Activated CD4-positive, alpha-beta T cell treated with anti-CD3 and anti-CD28 coated beads for 36 hours (primary cell): ENCODE measurements at regions of chr7 and their contacts with region 1.

Region 1: DNA sequence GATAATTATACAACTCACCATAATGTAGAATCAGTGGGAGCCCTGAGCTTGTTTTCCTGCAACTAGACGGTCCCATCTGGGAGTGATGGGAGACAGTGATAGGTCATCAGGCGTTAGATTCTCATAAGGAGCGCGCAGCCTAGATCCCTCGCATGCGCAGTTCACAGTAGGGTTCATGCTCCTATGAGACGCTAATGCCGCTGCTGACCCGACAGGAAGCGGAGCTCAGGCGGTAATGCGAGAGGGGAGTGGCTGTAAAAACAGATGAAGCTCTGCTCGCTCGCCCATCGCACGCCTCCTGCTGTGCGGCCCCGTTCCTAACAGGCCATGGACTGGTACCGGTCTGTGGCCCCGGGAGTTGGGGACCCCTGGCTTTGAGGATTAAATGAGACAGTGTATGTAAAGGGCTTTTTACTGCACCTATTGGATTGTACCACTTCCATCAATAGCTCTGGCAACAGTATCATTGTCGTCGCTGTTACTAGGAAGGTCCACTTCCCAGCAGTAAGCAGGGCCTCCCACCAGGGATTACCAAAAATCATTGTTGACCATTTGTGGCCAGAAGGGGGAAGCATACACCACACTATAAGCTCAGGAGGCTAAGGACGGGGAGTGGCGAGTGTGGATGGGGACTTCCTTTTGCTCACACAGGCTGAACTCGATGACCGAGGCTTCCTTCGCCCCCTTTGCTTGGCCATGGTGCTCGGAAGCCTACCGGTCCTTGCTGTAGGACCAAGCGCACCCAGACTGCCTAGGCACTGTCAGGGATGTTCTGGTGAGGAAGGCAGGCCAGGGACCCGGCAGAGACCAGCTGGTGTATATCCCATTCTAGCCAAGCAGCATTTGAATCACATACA is 26.4 kb downstream of the AKR1B1 start:
- DNase-seq: peak; percentile 85
- ATAC-seq: peak; percentile 94
- H3K4me3 Mint-ChIP-seq: peak overlapping the region; percentile 69
- H3K27ac Mint-ChIP-seq: peak overlapping the region; percentile 84
- H3K4me1 Mint-ChIP-seq: peaks cover 10% of the 10 kb centered on the region
- H3K27me3 Mint-ChIP-seq: peaks cover 2% of the 10 kb centered on the region

Region 2: GRCh38 chr7:134444198-134444871 is 11.8 kb after region 1 on chr7:
- CTCF ChIA-PET with region 1: interaction called, 11 read pairs
- POLR2A ChIA-PET with region 1: no interaction called
- intact Hi-C with region 1: no loop called
- DNase-seq: no peak
- ATAC-seq: no peak
- H3K4me3 Mint-ChIP-seq: no peak overlapping the region
- H3K27ac Mint-ChIP-seq: no peak overlapping the region
- H3K4me1 Mint-ChIP-seq: no peaks in the 10 kb centered on the region
- H3K27me3 Mint-ChIP-seq: no peaks in the 10 kb centered on the region

Region 3: DNA sequence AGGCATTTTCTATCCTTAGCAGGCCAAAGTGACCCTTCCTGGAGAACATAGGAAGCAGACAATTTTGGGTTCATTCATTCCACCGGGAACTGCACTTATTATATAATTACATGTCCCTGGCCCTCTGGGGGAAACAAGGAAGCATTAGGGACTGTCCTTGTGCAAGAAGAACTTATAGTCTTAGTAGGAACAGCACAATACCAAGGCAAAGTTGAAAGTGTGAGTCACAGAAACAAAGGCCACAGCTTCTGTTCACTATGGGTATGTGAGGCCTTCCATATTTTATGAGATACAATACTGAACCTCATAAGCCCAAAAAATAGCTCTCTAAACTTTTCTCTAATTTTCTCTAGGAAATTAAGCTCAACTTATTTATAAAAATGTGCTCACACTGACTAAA is 76.5 kb after region 1 on chr7:
- CTCF ChIA-PET with region 1: interaction called, 25 read pairs
- POLR2A ChIA-PET with region 1: no interaction called
- intact Hi-C with region 1: loop called (anchors 1 kb)
- DNase-seq: no peak
- ATAC-seq: no peak
- H3K4me3 Mint-ChIP-seq: no peak overlapping the region
- H3K27ac Mint-ChIP-seq: no peak overlapping the region
- H3K4me1 Mint-ChIP-seq: peaks cover 8% of the 10 kb centered on the region
- H3K27me3 Mint-ChIP-seq: no peaks in the 10 kb centered on the region

Region 4: GRCh38 chr7:134547397-134548054 is 115.0 kb after region 1 on chr7:
- CTCF ChIA-PET with region 1: interaction called, 29 read pairs
- POLR2A ChIA-PET with region 1: no interaction called
- intact Hi-C with region 1: loop called (anchors 1 kb)
- DNase-seq: peak; percentile 82
- ATAC-seq: peak; percentile 79
- H3K4me3 Mint-ChIP-seq: no peak overlapping the region
- H3K27ac Mint-ChIP-seq: no peak overlapping the region
- H3K4me1 Mint-ChIP-seq: peaks cover 4% of the 10 kb centered on the region
- H3K27me3 Mint-ChIP-seq: peaks cover 16% of the 10 kb centered on the region

Region 5: DNA sequence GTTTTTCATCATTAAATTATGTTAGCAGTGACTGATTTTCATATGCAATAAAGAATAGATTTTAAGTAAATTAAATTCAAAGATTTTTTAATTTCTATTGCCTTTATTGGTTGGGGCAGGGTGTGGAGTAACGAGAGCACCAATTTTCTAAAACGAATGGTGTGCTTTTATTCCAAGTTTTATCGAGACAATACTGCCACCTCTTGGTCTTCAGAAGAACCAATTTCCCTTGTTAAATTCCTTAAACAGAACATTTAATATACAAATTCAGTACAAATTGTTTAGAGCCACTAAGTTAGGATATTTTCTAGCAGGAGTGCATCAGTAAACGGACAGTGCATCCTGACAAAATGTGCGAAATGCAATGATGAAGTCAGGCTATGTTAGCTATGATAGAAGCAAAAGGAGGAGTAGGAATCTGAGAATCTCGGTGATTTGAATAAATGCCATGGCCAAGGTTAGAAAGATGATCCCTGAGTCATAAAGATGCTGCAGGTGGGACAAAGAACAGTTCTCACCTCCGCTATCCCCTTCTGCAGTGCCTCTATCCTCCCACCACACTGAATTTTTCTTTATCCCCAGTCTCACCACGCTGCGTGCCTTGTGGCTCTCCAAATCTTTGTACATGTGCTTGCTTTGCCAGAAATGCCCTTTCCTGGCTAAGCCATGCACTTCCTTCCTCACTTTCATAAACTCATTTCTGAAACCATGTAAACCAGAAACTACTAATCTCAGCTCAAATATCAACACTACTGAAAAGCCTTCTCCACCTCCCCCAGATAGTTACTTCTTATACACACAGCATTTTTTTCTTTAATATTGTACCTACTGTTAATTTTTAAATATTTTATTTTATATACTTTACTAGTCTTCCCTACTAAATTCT is 521.9 kb after region 1 on chr7:
- CTCF ChIA-PET with region 1: no interaction called
- POLR2A ChIA-PET with region 1: no interaction called
- intact Hi-C with region 1: loop called in 1 of 2 experiments (anchors 1 kb)
- DNase-seq: no peak
- ATAC-seq: no peak
- H3K4me3 Mint-ChIP-seq: no peak overlapping the region
- H3K27ac Mint-ChIP-seq: no peak overlapping the region
- H3K4me1 Mint-ChIP-seq: peaks cover 2% of the 10 kb centered on the region
- H3K27me3 Mint-ChIP-seq: no peaks in the 10 kb centered on the region